AG04449 (cell line): ENCODE measurements at regions of chr2 and their contacts with region 1.

Region 1: GRCh38 chr2:217886720-217887309 is 116.0 kb downstream of the TNS1 start:
- DNase-seq: no peak
- H3K4me3 ChIP-seq: no peak overlapping the region
- CTCF ChIP-seq: peak; percentile 82

Region 2: GRCh38 chr2:217858519-217859491 is 28.0 kb before region 1 on chr2:
- CTCF ChIA-PET with region 1: interaction called, 18 read pairs
- POLR2A ChIA-PET with region 1: interaction called, 3 read pairs
- DNase-seq: peak; percentile 96
- H3K4me3 ChIP-seq: no peak overlapping the region
- CTCF ChIP-seq: no peak

Region 3: GRCh38 chr2:217864963-217865772 is 21.6 kb before region 1 on chr2:
- CTCF ChIA-PET with region 1: interaction called, 40 read pairs
- POLR2A ChIA-PET with region 1: no interaction called
- DNase-seq: no peak
- H3K4me3 ChIP-seq: no peak overlapping the region
- CTCF ChIP-seq: no peak

Region 4: DNA sequence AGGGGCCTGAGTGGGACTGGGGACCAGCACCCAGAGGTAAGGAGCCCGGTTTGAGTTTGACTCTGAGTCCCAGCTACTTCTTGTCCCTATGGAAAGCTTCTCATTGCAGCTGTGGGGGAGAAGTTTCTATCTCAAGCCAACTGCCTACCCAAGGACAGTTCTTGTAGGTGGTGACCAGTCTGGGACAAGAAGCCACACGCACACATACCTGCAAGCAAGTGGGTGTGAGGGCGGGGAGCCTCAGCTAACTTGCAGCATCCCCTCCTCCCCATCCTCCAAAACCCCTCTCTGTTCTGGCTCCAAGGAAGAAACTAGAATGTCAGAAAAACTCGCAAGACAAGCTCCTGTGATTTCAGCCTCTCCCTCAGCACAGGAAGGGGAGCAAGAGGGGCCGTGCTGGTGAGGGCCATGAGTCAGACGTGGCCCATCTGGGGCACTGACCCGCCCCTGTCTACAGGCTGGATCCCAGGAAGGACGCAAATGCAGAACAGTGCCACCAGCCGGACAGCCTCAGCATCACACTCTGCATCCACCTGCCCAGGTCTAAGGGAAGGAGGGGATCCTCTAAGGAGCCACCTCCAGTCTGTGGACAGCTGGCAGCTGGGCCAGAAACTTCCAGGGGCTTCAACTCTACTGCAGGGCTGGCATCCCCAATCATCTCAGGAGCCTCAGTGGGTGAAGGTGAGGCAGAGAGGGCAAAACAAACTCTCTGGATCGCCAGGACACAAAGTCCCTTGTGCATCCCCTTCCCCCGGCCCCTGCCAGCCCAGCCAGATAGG is 12.6 kb after region 1 on chr2:
- CTCF ChIA-PET with region 1: interaction called, 182 read pairs
- POLR2A ChIA-PET with region 1: interaction called, 3 read pairs
- DNase-seq: no peak
- H3K4me3 ChIP-seq: no peak overlapping the region
- CTCF ChIP-seq: peak; percentile 85

Region 5: GRCh38 chr2:218033590-218034496 is 147.0 kb after region 1 on chr2:
- CTCF ChIA-PET with region 1: interaction called, 18 read pairs
- POLR2A ChIA-PET with region 1: no interaction called
- DNase-seq: no peak
- H3K4me3 ChIP-seq: no peak overlapping the region
- CTCF ChIP-seq: no peak